ENCODE measurements at regions of chr2 and their contacts with region 1.

Region 1: GRCh38 chr2:138298900-138299299 is 202.7 kb upstream of the SPOPL start:
- DNase-seq: peak; percentile 54
- ATAC-seq: peak; percentile 89
- H3K4me3 ChIP-seq: no peak overlapping the region
- H3K27ac ChIP-seq: peak overlapping the region; percentile 57
- H3K4me1 ChIP-seq: peaks cover 10% of the 10 kb centered on the region
- H3K27me3 ChIP-seq: no peaks in the 10 kb centered on the region
- CTCF ChIP-seq: no peak
- EP300 ChIP-seq: 0 out of 4 replicates have a peak, but pooled peaks of 1 of the 2 experiments have one; percentile 22
- POLR2A ChIP-seq: no peak
- RAD21 ChIP-seq: no peak

Region 2: GRCh38 chr2:138237667-138238384 is 61.1 kb before region 1 on chr2:
- CTCF ChIA-PET with region 1: interaction called, 5 read pairs
- POLR2A ChIA-PET with region 1: interaction called, 5 read pairs
- RAD21 ChIA-PET with region 1: interaction called, 17 read pairs
- SMC1A ChIA-PET with region 1: interaction called, 7 read pairs
- in situ Hi-C with region 1: no loop called
- intact Hi-C with region 1: no loop called
- DNase-seq: no peak
- ATAC-seq: no peak
- H3K4me3 ChIP-seq: no peak overlapping the region
- H3K27ac ChIP-seq: no peak overlapping the region
- H3K4me1 ChIP-seq: no peaks in the 10 kb centered on the region
- H3K27me3 ChIP-seq: no peaks in the 10 kb centered on the region
- CTCF ChIP-seq: no peak
- EP300 ChIP-seq: no peak
- POLR2A ChIP-seq: no peak
- RAD21 ChIP-seq: no peak

Region 3: GRCh38 chr2:138255670-138256069 is 43.2 kb before region 1 on chr2:
- CTCF ChIA-PET with region 1: interaction called, 3 read pairs
- POLR2A ChIA-PET with region 1: no interaction called
- RAD21 ChIA-PET with region 1: no interaction called
- SMC1A ChIA-PET with region 1: no interaction called
- in situ Hi-C with region 1: no loop called
- intact Hi-C with region 1: loop called (anchors 5 kb)
- DNase-seq: no peak
- ATAC-seq: peak; percentile 56; the same call in 2 of the 3 replicates
- H3K4me3 ChIP-seq: no peak overlapping the region
- H3K27ac ChIP-seq: no peak overlapping the region
- H3K4me1 ChIP-seq: no peaks in the 10 kb centered on the region
- H3K27me3 ChIP-seq: no peaks in the 10 kb centered on the region
- CTCF ChIP-seq: no peak
- EP300 ChIP-seq: no peak
- POLR2A ChIP-seq: no peak
- RAD21 ChIP-seq: no peak